Heart left ventricle (tissue), 16 donors: ENCODE measurements at regions of chr15 and their contacts with region 1.

Region 1: DNA sequence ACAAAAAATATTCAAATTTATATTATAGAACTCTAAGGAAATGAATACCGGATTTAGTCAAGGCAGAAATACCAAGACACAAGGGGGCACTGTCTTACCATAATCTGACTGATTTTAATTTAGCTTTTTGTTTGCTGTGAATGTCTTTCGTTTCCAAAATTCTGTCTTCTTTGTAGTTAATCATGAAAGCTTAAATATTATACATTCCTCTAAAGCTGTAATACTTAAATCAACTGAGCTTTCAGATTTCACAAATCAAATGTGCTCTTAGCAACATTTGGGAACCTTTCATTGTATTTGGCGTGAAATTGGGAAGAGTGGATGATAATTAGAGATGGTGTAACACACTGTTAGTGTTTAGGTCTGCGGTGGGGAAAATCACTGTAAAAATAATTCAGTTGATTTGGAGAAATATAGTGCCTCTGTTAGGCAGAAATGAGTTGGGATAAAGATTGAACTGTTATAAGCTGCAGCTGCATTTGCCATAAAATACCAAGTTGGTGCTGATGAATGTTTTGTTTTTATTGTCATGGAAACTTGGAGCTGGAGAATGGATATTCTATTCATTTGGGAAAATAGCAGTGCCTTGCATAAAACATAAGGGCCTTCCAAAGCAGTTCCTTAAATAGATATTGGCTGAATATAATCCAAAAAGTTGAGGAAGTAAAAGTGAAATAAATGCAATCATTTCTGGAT is 228.2 kb downstream of the TCF12 start:
- DNase-seq: peak in 1 of 5 donors; percentile 27
- ATAC-seq: peak in 2 of 4 donors; percentile 32 to 56
- H3K4me3 ChIP-seq: peak overlapping the region in 10 of 12 donors; percentile 4 to 45 (median 30)
- H3K27ac ChIP-seq: peak overlapping the region in 10 of 12 donors; percentile 2 to 67 (median 39)
- H3K4me1 ChIP-seq: peaks cover 3 to 60% (median 40%) of the 10 kb centered on the region in 12 donors
- H3K27me3 ChIP-seq: no peaks in the 10 kb centered on the region
- CTCF ChIP-seq: peak; percentile 62 to 86 (median 80)
- POLR2A ChIP-seq: no peak

Region 2: DNA sequence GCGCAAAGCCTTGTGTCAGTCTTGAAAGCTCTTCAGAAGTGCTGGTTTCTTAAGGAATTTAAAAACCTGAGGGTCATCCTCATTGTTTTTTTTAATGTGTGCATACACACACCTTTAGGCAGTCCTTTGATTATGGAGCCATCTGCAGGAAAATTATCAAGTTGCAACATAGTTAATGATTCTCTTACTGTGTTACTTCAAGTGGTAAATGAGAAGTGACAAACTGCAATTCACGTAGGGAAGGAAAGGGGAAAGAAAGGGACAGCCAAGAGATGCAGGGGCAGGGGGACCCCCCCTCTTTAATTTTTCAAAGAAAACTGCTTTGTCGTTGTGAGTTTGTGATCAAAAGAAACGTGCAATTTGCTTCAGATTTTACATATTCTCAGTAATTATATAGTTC is 67.2 kb after region 1 on chr15:
- intact Hi-C with region 1: loop called (anchors 2 to 5 kb)
- DNase-seq: no peak
- ATAC-seq: peak; percentile 47 to 68 (median 60)
- H3K4me3 ChIP-seq: no peak overlapping the region
- H3K27ac ChIP-seq: no peak overlapping the region
- H3K4me1 ChIP-seq: peaks cover 0 to 67% (median 22%) of the 10 kb centered on the region in 12 donors
- H3K27me3 ChIP-seq: no peaks in the 10 kb centered on the region
- CTCF ChIP-seq: peak; percentile 30 to 73 (median 64)
- POLR2A ChIP-seq: no peak

Region 3: DNA sequence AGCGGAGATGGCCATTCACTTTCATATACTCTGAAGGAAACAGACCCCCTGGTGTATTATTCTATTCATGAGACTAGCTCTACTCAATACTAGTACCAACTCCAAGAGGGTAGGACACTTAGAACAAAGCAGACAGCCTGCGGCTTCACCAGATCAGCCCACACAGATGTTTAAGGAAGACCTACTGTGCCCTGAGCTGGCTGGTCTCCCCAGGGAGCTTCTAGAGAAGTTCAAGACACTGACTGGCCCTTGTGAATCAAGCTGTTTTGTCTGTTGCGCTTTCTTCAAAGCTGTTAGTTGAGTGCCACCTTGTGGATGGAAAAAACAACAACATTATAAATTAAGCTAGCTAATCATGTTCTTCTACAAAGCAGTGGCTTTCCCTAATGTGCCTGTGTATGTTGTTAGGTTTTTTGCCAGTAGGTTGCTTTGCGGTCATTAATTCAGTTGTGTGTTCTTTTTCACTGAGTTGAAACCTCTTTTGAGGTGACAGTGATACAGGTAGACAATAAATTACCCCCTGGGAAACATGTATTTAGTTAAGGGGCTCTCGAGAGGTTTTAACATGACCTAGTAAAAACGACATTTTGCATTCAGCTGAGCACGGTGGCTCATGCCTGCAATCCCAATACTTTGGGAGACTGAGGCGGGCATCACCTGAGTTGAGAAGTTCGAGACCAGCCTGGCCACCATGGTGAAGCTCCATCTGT is 380.9 kb after region 1 on chr15:
- intact Hi-C with region 1: loop called in 8 of 10 experiments (anchors 5 to 10 kb)
- DNase-seq: peak in 2 of 5 donors; percentile 51 to 55
- ATAC-seq: peak in 3 of 4 donors; percentile 67 to 76 (median 76)
- H3K4me3 ChIP-seq: no peak overlapping the region
- H3K27ac ChIP-seq: no peak overlapping the region
- H3K4me1 ChIP-seq: peaks cover 0 to 14% (median 3%) of the 10 kb centered on the region in 12 donors
- H3K27me3 ChIP-seq: no peaks in the 10 kb centered on the region
- CTCF ChIP-seq: peak; percentile 49 to 80 (median 66)
- POLR2A ChIP-seq: no peak

Region 4: GRCh38 chr15:57534281-57534680 is 387.6 kb after region 1 on chr15:
- intact Hi-C with region 1: loop called in 8 of 10 experiments (anchors 5 to 10 kb)
- DNase-seq: peak in 1 of 5 donors; percentile 40
- ATAC-seq: peak; percentile 28 to 77 (median 60)
- H3K4me3 ChIP-seq: no peak overlapping the region
- H3K27ac ChIP-seq: peak overlapping the region in 7 of 12 donors; percentile 2 to 39 (median 26)
- H3K4me1 ChIP-seq: peaks cover 0 to 38% (median 21%) of the 10 kb centered on the region in 12 donors
- H3K27me3 ChIP-seq: no peaks in the 10 kb centered on the region
- CTCF ChIP-seq: no peak
- POLR2A ChIP-seq: no peak